ENCODE measurements at regions of chr18 and their contacts with region 1.

Region 1: GRCh38 chr18:24704946-24705630 is 244.7 kb downstream of the HRH4 start:
- DNase-seq: no peak
- H3K4me3 ChIP-seq: no peak overlapping the region
- H3K27ac ChIP-seq: no peak overlapping the region
- H3K4me1 ChIP-seq: peaks cover 0 to 15% (median 8%) of the 10 kb centered on the region in 4 donors
- H3K27me3 ChIP-seq: no peaks in the 10 kb centered on the region
- CTCF ChIP-seq: no peak

Region 2: DNA sequence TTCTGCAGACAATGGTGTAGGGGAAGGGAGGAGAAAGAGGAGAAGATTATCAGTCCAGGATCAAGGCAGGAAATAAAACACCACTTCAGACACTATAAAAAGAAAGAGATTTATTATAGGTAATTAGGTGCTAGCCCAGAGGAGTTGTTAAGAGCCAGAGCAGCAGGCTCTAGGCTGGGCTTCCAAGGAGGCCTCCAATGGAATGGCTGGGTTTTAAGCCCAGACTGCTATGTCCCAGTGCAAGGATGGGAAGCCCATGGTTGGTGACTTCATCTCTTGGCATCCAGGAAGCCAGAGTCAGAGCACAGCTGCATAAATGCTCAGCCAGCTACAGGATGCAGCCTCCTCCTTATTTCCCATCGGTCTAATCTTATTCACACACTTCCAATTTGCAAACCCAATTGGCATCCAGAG is 920.2 kb before region 1 on chr18:
- intact Hi-C with region 1: no loop called
- DNase-seq: no peak
- H3K4me3 ChIP-seq: no peak overlapping the region
- H3K27ac ChIP-seq: no peak overlapping the region
- H3K4me1 ChIP-seq: peaks cover 0 to 5% (median 0%) of the 10 kb centered on the region in 4 donors
- H3K27me3 ChIP-seq: no peaks in the 10 kb centered on the region
- CTCF ChIP-seq: no peak

Region 3: GRCh38 chr18:24560511-24560981 is 144.5 kb before region 1 on chr18:
- intact Hi-C with region 1: loop called (anchors 5 kb)
- DNase-seq: no peak
- H3K4me3 ChIP-seq: no peak overlapping the region
- H3K27ac ChIP-seq: no peak overlapping the region
- H3K4me1 ChIP-seq: no peaks in the 10 kb centered on the region
- H3K27me3 ChIP-seq: peaks cover 0 to 3% of the 10 kb centered on the region in 2 donors
- CTCF ChIP-seq: no peak

Measured in tibial artery (tissue), 4 donors.